ENCODE measurements at regions of chr5 and their contacts with region 1.

Region 1: DNA sequence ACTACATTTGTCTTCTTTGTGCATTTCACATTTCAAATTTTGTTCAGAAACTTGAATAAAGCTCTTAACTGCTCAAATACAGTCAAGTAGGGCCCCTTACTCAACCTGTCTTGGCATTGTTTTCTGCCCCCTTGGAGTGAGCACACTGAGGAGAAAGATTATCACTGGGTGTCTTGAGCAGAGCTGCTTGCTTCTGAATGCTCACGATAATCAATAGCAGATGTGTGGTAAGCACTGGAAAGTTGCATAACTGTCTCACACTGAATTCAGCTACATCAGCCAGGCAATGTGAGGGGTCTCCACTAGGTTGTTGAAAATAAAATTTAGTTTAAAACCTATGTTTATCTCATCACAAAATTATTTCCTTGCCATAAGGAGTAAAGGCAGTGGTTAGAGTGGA is 7.8 kb upstream of the TNFAIP8 start:
- DNase-seq: peak; percentile 24
- H3K4me3 ChIP-seq: no peak overlapping the region
- H3K27ac ChIP-seq: peak overlapping the region in 1 of 2 experiments; percentile 60; a peak in 2 of 4 replicates
- H3K4me1 ChIP-seq: peaks cover 7 to 13% of the 10 kb centered on the region in 2 experiments; a peak in 2 of 4 replicates
- H3K27me3 ChIP-seq: no peaks in the 10 kb centered on the region
- CTCF ChIP-seq: 0 out of 2 replicates have a peak, but pooled peaks have one; percentile 11
- EP300 ChIP-seq: 0 out of 4 replicates have a peak, but pooled peaks of 1 of the 2 experiments have one; percentile 16
- RAD21 ChIP-seq: no peak

Region 2: GRCh38 chr5:119105971-119106370 is 242.0 kb before region 1 on chr5:
- CTCF ChIA-PET with region 1: no interaction called
- POLR2A ChIA-PET with region 1: no interaction called
- DNase-seq: no peak
- H3K4me3 ChIP-seq: no peak overlapping the region
- H3K27ac ChIP-seq: no peak overlapping the region
- H3K4me1 ChIP-seq: no peaks in the 10 kb centered on the region
- H3K27me3 ChIP-seq: no peaks in the 10 kb centered on the region
- CTCF ChIP-seq: no peak
- EP300 ChIP-seq: no peak
- RAD21 ChIP-seq: no peak

Region 3: DNA sequence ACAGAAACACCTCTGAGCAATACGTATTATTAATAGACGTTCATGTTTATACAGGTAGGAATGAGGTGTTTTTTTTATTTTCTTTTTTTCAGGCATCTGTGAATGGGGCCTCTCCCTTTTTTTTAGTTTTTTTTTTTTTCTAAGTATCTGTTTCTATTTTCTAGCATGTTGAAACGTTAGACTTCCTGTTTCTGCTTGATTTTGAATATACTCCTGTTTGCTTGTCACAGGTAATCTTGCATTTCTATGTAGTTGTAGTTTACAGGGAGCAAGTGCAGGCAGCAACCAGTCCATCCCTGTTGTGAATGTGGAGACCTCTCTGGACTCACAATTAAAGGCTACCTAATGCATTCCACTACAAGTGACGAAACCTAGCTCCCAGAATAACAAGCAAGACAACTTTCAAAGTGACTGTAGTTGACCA is 15.0 kb before region 1 on chr5:
- CTCF ChIA-PET with region 1: interaction called, 24 read pairs
- POLR2A ChIA-PET with region 1: no interaction called
- DNase-seq: no peak
- H3K4me3 ChIP-seq: no peak overlapping the region
- H3K27ac ChIP-seq: no peak overlapping the region
- H3K4me1 ChIP-seq: peaks cover 10 to 18% of the 10 kb centered on the region in 2 experiments; a peak in 2 of 4 replicates
- H3K27me3 ChIP-seq: no peaks in the 10 kb centered on the region
- CTCF ChIP-seq: no peak
- EP300 ChIP-seq: no peak
- RAD21 ChIP-seq: no peak

Region 4: GRCh38 chr5:119501671-119502182 is 153.7 kb after region 1 on chr5:
- CTCF ChIA-PET with region 1: no interaction called
- POLR2A ChIA-PET with region 1: no interaction called
- DNase-seq: no peak
- H3K4me3 ChIP-seq: no peak overlapping the region
- H3K27ac ChIP-seq: no peak overlapping the region
- H3K4me1 ChIP-seq: no peaks in the 10 kb centered on the region
- H3K27me3 ChIP-seq: no peaks in the 10 kb centered on the region
- CTCF ChIP-seq: no peak
- EP300 ChIP-seq: no peak
- RAD21 ChIP-seq: no peak

Measured in SK-N-SH (cell line).